ENCODE measurements at regions of chr4 and their contacts with region 1.

Region 1: DNA sequence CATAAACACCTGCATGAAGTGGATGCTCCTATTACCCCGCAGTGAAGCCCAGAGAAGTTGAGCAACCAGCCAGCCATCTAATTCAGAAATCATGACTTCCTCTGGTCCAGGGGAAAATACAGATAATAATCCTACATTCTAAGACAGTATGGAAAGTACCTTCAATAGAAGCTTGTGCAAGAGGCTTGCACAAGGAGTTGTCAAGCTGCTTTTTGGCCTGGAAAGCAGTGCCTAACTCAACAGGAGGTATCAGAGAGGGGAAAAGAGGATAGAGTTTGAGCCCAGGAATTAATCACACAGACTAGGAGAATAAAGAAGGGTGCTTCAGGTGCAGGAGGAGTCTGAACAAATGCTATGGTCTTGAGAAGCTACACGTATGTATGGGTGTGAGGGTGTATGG is 26.7 kb downstream of the TMEM192 start:
- DNase-seq: no peak
- H3K4me3 ChIP-seq: no peak overlapping the region
- H3K27ac ChIP-seq: no peak overlapping the region
- H3K4me1 ChIP-seq: no peaks in the 10 kb centered on the region
- H3K27me3 ChIP-seq: no peaks in the 10 kb centered on the region
- CTCF ChIP-seq: no peak
- POLR2A ChIP-seq: no peak

Region 2: GRCh38 chr4:164779811-164780216 is 306.1 kb before region 1 on chr4:
- intact Hi-C with region 1: loop called (anchors 10 kb)
- DNase-seq: peak; percentile 45
- H3K4me3 ChIP-seq: no peak overlapping the region
- H3K27ac ChIP-seq: no peak overlapping the region
- H3K4me1 ChIP-seq: no peaks in the 10 kb centered on the region
- H3K27me3 ChIP-seq: no peaks in the 10 kb centered on the region
- CTCF ChIP-seq: peak; percentile 56 to 82 (median 74)
- POLR2A ChIP-seq: no peak

Region 3: DNA sequence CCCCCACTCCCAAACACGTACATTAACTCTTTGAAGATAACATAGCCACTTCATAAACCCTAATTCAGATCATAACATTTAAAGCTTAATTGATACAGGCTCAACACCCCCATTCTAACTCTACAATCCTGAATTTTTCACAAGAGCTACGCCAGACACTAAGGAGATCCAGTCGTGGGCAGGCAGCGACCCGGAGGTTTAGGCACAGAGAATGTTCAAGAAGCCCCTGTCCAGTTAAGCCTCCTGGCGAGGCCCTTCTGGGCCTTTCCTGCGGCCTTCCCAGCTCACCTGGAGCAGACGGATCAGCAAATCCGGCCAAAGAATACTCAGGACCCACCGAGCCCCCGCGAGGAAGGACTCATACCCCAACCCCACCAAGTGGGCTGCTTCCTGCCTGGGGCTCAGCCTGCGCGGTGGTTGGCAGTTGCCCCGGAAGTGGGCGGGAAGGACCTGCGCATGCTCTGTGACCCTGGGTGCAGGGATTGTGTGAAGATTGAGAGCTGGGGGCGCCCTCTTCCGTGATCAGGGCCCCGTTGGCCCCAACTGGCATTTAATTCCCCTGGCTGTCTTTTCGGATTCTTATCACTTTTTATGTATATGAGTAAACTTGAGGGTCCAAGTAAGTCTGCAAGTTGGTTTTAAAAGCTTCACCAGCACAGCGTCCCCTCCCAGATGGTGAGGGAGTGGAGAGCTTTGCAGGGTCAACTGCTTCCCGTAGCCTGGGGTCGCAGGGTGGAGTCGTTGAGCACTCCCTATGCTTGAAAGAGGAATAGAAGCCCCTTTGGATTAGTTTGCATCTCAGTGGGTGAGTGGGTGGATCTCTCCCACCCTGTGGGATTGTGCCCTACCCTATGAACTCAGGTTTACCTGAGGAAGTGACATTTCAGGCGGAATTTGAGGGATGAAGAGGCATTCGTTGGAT is 108.4 kb before region 1 on chr4 and contains the start of gene TRIM61:
- intact Hi-C with region 1: no loop called
- DNase-seq: peak; percentile 93
- H3K4me3 ChIP-seq: peak within 1 kb of the TSS; percentile 53 to 76
- H3K27ac ChIP-seq: peak within 1 kb of the TSS; percentile 12 to 50
- H3K4me1 ChIP-seq: peaks cover 2% of the 10 kb centered on the region
- H3K27me3 ChIP-seq: no peaks in the 10 kb centered on the region
- CTCF ChIP-seq: peak in 1 of 3 experiments; percentile 8
- POLR2A ChIP-seq: no peak
- total RNA-seq, gene TRIM61: 4.5 to 4.9 TPM

Measured in testis (tissue), 5 donors.